Right ventricle myocardium inferior (tissue), 1 donor: ENCODE measurements at regions of chr2 and their contacts with region 1.

Region 1: GRCh38 chr2:65309708-65310107 is 82.1 kb downstream of the ACTR2 start:
- DNase-seq: no peak
- ATAC-seq: peak; percentile 15

Region 2: GRCh38 chr2:65349863-65350262 is 40.2 kb after region 1 on chr2:
- intact Hi-C with region 1: loop called (anchors 5 kb)
- DNase-seq: peak; percentile 82
- ATAC-seq: no peak

Region 3: DNA sequence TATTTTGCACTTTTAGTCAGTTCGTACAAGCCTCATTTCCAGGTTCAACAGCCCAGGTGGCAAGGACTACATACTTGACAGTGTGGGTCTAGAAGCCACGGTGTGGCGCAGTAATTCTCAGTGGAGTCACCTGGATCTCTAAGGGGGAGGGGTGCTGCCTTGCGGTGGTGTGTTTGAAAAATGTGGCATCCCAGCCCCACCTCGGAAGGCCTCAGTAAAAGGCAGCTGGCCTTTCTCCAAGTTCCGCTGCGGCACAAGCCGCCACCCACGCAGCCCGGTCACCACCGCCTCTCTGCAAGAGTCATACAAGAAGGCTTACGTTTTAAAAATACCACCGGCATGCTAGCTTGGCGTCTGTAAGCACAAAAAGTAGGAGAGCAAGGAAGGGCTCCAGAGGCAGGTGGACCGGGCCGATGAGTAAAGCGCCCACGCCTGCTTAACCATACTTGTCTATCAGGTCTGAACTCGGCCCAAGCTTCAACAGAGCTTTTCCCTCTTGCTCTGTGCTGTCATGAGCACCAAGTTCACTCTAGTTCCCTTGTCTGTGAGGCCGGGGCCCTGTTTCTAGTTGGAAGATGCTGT is 73.2 kb after region 1 on chr2:
- intact Hi-C with region 1: loop called (anchors 5 kb)
- DNase-seq: peak; percentile 88
- ATAC-seq: peak; percentile 64

Region 4: GRCh38 chr2:65545837-65546805 is 236.4 kb after region 1 on chr2:
- intact Hi-C with region 1: loop called (anchors 5 kb)
- DNase-seq: no peak
- ATAC-seq: peak; percentile 57

Region 5: GRCh38 chr2:65922794-65923193 is 613.1 kb after region 1 on chr2:
- intact Hi-C with region 1: no loop called
- DNase-seq: no peak
- ATAC-seq: peak; percentile 75